H1 (cell line): ENCODE measurements at regions of chr2 and their contacts with region 1.

Region 1: DNA sequence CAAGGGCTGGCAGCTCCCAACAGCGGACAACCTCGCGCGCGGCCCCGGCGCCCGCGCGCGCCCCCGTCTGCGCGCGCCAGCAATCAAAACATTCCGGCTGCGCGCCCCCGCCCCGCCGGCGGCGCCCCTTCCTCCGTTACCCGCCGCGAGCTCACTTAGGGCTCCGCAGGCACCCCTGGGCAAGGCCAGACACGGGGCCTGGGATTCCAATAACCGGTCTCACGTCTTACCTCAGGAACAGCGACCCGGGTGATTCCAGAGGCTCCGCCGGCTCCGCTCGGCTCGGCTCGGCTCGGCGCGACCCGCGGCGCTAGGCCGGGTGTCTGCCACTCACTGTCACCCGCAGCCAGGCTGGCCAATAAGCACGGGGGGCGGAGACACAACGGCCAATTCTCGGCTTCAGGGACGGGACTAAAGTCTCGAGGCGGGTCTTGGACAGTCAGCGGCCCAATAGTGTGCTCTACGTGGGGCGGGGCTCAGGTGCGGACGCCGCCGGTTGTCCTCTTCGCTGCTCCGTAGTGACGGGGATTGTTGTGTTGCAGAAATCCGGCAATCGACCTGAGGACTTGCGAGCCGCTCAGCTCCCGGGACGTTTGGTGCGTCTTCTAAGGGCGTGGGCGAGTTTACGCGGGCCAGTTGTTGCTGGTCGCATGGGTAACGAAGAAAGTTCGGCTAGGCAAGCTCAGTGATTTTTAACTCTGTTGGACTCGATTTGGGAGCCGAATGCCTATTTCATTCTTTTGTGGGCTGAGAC is at the starts of genes ANKZF1 and ATG9A:
- DNase-seq: peak; percentile 93 to 95
- H3K4me3 ChIP-seq: peak within 1 kb of the TSS; percentile 82 to 97 (median 92)
- H3K27ac ChIP-seq: peak within 1 kb of the TSS; percentile 71
- H3K4me1 ChIP-seq: peaks cover 0 to 6% (median 3%) of the 10 kb centered on the region in 4 experiments; a peak in 5 of 7 replicates
- H3K27me3 ChIP-seq: no peaks in the 10 kb centered on the region; a peak in 1 of 7 replicates
- CTCF ChIP-seq: no peak
- EP300 ChIP-seq: 0 out of 3 replicates have a peak, but pooled peaks of 1 of the 2 experiments have one; percentile 13
- POLR2A ChIP-seq: peak; percentile 79 to 90
- RAD21 ChIP-seq: peak in 1 of 2 experiments; percentile 6; a peak in 1 of 4 replicates
- total RNA-seq, gene ANKZF1: 44.4 and 50.1 TPM in 2 replicates
- total RNA-seq, gene ATG9A: 43.6 and 43.8 TPM in 2 replicates

Region 2: GRCh38 chr2:219245148-219245898 is 15.8 kb after region 1 on chr2 and contains the starts of genes GLB1L and STK16:
- CTCF ChIA-PET with region 1: interaction called, 7 read pairs
- POLR2A ChIA-PET with region 1: interaction called, 190 read pairs
- DNase-seq: peak in 1 of 2 experiments; percentile 98
- H3K4me3 ChIP-seq: peak within 1 kb of the TSS; percentile 74 to 81 (median 80)
- H3K27ac ChIP-seq: peak within 1 kb of the TSS; percentile 91
- H3K4me1 ChIP-seq: peaks cover 0 to 5% (median 3%) of the 10 kb centered on the region in 4 experiments; a peak in 3 of 7 replicates
- H3K27me3 ChIP-seq: no peaks in the 10 kb centered on the region
- CTCF ChIP-seq: no peak
- EP300 ChIP-seq: no peak
- POLR2A ChIP-seq: peak in 1 of 2 experiments; percentile 91; a peak in 2 of 3 replicates
- RAD21 ChIP-seq: no peak
- total RNA-seq, gene GLB1L: 3.2 and 3.7 TPM in 2 replicates
- total RNA-seq, gene STK16: 17.0 and 21.3 TPM in 2 replicates

Region 3: GRCh38 chr2:219459460-219460311 is 230.2 kb after region 1 on chr2:
- CTCF ChIA-PET with region 1: no interaction called
- POLR2A ChIA-PET with region 1: no interaction called
- DNase-seq: peak in 1 of 2 experiments; percentile 94
- H3K4me3 ChIP-seq: peak overlapping the region in 1 of 4 experiments; percentile 46; a peak in 1 of 8 replicates
- H3K27ac ChIP-seq: no peak overlapping the region
- H3K4me1 ChIP-seq: peaks cover 9 to 23% (median 21%) of the 10 kb centered on the region in 4 experiments
- H3K27me3 ChIP-seq: no peaks in the 10 kb centered on the region; a peak in 1 of 7 replicates
- CTCF ChIP-seq: peak in 2 of 3 experiments; percentile 88 to 98; a peak in 3 of 4 replicates
- EP300 ChIP-seq: no peak
- POLR2A ChIP-seq: no peak
- RAD21 ChIP-seq: peak; percentile 68 to 75

Region 4: DNA sequence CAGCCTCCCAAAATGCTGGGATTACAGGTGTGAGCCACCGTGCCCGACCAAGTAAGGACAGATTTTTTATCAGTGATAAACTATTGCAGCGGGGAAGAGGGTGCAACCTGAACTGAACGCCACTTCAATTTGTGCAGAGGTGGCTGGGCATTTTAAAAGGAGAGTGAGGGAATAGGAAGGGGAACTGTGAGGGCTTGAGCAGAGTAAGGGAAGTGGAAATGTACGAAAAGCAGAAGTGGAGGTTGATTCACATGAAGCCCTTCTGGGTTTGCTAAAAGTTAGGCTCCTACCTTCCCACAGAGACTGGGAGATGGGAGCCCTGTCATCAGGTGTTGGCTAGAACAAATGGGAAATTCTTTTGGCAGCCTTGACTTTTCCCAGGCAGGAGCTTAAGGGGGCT is 374.3 kb after region 1 on chr2:
- CTCF ChIA-PET with region 1: no interaction called
- POLR2A ChIA-PET with region 1: no interaction called
- DNase-seq: no peak
- H3K4me3 ChIP-seq: no peak overlapping the region
- H3K27ac ChIP-seq: no peak overlapping the region
- H3K4me1 ChIP-seq: no peaks in the 10 kb centered on the region; a peak in 1 of 7 replicates
- H3K27me3 ChIP-seq: no peaks in the 10 kb centered on the region
- CTCF ChIP-seq: no peak
- EP300 ChIP-seq: no peak
- POLR2A ChIP-seq: no peak
- RAD21 ChIP-seq: no peak